Motor neuron (in vitro differentiated cells): ENCODE measurements at regions of chr17 and their contacts with region 1.

Region 1: GRCh38 chr17:38982858-38983746 is 15.9 kb upstream of the FBXO47 start:
- ATAC-seq: peak; percentile 39 to 81 (median 65)
- H3K4me3 ChIP-seq: no peak overlapping the region
- H3K27ac ChIP-seq: no peak overlapping the region
- H3K4me1 ChIP-seq: no peaks in the 10 kb centered on the region

Region 2: GRCh38 chr17:39144416-39144840 is 161.3 kb after region 1 on chr17:
- in situ Hi-C with region 1: loop called in 2 of 9 experiments (anchors 10 to 25 kb)
- ATAC-seq: peak in 6 of 8 experiments; percentile 43 to 90 (median 67)
- H3K4me3 ChIP-seq: no peak overlapping the region
- H3K27ac ChIP-seq: no peak overlapping the region
- H3K4me1 ChIP-seq: no peaks in the 10 kb centered on the region

Region 3: DNA sequence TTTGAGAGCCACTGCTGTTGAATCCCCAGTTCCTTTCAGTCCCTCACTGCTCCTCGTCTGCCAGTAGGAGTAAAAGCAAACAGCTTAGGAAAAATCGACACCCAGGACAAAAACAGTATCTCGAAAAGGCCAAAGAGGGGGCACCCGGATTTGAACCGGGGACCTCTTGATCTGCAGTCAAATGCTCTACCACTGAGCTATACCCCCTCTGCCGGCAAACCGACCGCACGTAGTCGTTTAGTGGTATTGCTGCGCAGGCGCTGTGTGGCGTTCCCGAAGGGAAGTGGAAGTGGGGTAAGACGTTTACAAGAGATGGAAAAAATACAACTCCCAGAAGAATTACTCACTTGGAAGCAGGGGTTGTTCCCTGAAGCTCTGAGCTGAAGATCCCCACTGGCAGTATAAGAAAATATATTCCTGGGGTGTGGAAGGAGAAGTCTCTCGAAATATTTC is 170.5 kb after region 1 on chr17:
- in situ Hi-C with region 1: loop called in 6 of 9 experiments (anchors 10 to 25 kb)
- ATAC-seq: peak; percentile 56 to 73 (median 66)
- H3K4me3 ChIP-seq: peak overlapping the region; percentile 54 to 79 (median 64)
- H3K27ac ChIP-seq: peak overlapping the region in 1 of 2 donors; percentile 57
- H3K4me1 ChIP-seq: peaks cover 3 to 6% of the 10 kb centered on the region in 2 donors

Region 4: GRCh38 chr17:39164675-39165143 is 181.6 kb after region 1 on chr17:
- in situ Hi-C with region 1: loop called in 4 of 9 experiments (anchors 10 to 25 kb)
- ATAC-seq: peak; percentile 93 to 98 (median 96)
- H3K4me3 ChIP-seq: peak overlapping the region; percentile 29 to 44 (median 41)
- H3K27ac ChIP-seq: no peak overlapping the region
- H3K4me1 ChIP-seq: no peaks in the 10 kb centered on the region

Region 5: GRCh38 chr17:39244600-39245570 is 261.8 kb after region 1 on chr17:
- in situ Hi-C with region 1: loop called in 3 of 9 experiments (anchors 10 to 25 kb)
- ATAC-seq: peak; percentile 88 to 95 (median 92)
- H3K4me3 ChIP-seq: no peak overlapping the region
- H3K27ac ChIP-seq: no peak overlapping the region
- H3K4me1 ChIP-seq: peaks cover 4 to 8% of the 10 kb centered on the region in 2 donors